Motor neuron (in vitro differentiated cells): ENCODE measurements at regions of chrX and their contacts with region 1.

Region 1: GRCh38 chrX:11533211-11533651 is 132.5 kb downstream of the ARHGAP6 start:
- ATAC-seq: peak; percentile 66 to 92 (median 76)
- H3K4me3 ChIP-seq: no peak overlapping the region
- H3K27ac ChIP-seq: no peak overlapping the region
- H3K4me1 ChIP-seq: no peaks in the 10 kb centered on the region

Region 2: DNA sequence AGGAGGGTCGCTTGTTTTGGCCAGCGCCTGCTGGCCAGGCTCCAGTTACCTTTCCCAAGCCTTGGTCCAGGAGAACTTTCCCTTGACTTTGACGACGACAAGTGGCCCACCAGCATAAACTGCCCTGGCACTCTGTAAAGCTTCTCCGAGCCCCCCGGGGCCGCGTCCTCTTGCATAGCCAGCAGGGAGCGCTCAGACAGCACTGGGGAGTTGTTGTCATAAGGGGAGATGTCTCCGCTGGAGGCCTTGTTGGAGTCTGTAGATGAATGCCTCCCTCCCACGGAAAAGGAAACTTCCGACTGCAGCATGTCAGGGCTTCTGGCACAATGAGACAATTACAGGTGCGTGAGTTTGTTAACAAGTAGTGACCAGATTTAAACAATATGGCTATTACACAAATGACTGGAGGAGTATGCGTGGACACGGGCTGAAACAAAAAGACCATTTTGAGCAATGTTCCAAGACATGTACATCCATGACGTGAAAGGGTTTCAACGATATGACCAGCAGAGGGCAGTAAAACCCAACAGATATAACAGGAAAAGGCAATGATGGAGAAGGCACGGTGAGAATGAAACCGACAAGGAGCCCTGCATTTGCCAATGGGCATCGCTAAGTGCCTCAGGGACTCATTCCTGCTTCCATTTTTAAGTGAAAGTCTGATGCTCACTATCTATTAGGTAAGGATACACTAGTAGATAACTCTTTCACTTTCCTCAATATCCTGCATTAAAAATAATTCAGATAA is 389.1 kb before region 1 on chrX:
- in situ Hi-C with region 1: loop called in 3 of 9 experiments (anchors 25 kb)
- ATAC-seq: peak in 7 of 8 experiments; percentile 56 to 95 (median 76)
- H3K4me3 ChIP-seq: no peak overlapping the region
- H3K27ac ChIP-seq: no peak overlapping the region
- H3K4me1 ChIP-seq: no peaks in the 10 kb centered on the region

Region 3: DNA sequence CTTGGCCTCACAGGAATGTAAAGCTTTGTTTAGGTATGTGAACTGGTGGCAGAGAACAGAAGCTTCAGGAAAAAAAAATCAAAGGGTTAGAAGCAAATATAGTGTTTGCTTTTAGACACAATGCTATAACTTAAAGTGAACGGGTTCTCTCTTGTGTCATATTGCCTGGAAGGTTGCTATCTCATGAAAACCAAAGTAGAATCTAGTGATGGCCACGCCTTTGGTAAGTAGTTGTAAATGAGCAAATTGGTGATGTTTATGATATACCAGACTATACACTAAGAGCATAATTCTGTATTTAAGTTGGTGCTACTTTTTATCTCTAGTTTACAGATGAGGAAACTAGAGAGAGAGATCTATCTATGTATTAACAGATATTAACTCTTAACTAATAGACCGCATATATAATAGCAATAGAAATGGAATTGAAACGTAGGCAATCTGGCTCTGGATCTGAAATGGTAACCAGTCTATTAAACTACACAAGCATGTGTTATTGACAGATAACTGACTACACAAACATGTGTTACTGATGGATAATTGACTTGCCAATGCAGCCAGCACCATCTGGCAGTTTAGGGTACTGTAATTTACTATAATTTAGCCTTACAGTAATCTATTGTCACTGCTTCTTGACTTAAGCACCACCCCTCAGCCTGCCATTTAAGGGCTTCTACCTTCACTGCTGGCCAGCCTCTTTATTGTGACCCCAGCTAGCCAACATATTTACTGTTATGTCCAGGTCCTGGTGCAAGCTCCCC is 381.3 kb before region 1 on chrX:
- in situ Hi-C with region 1: loop called in 5 of 9 experiments (anchors 25 kb)
- ATAC-seq: no peak
- H3K4me3 ChIP-seq: no peak overlapping the region
- H3K27ac ChIP-seq: no peak overlapping the region
- H3K4me1 ChIP-seq: no peaks in the 10 kb centered on the region

Region 4: DNA sequence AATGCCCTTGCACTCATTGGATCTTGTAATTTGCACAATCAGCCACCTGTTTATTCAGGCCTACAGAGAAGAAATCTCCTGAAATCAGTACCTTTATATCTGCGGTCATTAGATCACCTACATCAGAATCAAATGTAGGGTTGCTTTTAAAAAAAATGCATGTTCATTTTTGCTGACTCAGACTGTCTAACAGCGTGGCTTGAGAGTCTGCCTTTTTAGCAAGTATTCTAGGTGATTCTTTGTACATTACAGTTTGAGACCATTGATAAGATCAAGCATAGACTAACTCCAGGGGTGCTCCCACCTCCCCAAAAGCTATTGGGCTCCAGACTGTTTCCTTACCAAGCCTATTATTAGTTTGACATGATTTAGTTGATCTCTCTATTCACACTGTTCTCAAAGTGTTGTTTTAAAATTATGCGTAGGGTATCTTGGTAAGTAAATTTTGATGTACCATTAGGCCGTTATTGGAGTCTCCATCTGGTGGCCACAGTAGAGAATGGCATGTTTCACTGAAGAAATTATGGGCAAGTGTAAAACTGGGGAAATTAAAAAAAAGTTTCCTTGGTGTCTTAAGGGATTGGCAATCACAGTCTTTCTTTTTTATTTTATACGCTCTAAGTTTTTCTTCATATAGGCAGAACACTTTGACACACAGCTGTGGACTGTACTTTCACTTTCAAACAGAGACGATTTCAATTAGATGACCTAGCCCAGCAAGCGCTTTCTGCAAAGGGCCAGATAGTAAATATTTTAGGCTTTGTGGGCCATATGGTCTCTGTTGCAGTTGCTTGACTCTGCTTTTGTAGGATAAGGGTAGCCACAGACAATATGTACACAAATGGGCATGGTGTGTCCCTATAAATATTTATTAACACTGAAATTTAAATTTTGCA is 191.1 kb after region 1 on chrX:
- in situ Hi-C with region 1: loop called in 1 of 9 experiments (anchors 25 kb)
- ATAC-seq: peak in 1 of 8 experiments; percentile 31
- H3K4me3 ChIP-seq: no peak overlapping the region
- H3K27ac ChIP-seq: no peak overlapping the region
- H3K4me1 ChIP-seq: no peaks in the 10 kb centered on the region

Region 5: GRCh38 chrX:11758400-11759171 is 225.4 kb after region 1 on chrX:
- in situ Hi-C with region 1: loop called in 6 of 9 experiments (anchors 25 kb)
- ATAC-seq: peak; percentile 59 to 72 (median 64)
- H3K4me3 ChIP-seq: peak overlapping the region; percentile 51 to 82 (median 71)
- H3K27ac ChIP-seq: peak overlapping the region; percentile 90 to 94
- H3K4me1 ChIP-seq: no peaks in the 10 kb centered on the region